Tibial artery (tissue), 4 donors: ENCODE measurements at regions of chr16 and their contacts with region 1.

Region 1: GRCh38 chr16:658679-659571 is 9.0 kb upstream of the RHOT2 start:
- DNase-seq: no peak
- H3K4me3 ChIP-seq: no peak overlapping the region
- H3K27ac ChIP-seq: no peak overlapping the region
- H3K4me1 ChIP-seq: peaks cover 0 to 15% (median 13%) of the 10 kb centered on the region in 4 donors
- H3K27me3 ChIP-seq: no peaks in the 10 kb centered on the region
- CTCF ChIP-seq: no peak

Region 2: DNA sequence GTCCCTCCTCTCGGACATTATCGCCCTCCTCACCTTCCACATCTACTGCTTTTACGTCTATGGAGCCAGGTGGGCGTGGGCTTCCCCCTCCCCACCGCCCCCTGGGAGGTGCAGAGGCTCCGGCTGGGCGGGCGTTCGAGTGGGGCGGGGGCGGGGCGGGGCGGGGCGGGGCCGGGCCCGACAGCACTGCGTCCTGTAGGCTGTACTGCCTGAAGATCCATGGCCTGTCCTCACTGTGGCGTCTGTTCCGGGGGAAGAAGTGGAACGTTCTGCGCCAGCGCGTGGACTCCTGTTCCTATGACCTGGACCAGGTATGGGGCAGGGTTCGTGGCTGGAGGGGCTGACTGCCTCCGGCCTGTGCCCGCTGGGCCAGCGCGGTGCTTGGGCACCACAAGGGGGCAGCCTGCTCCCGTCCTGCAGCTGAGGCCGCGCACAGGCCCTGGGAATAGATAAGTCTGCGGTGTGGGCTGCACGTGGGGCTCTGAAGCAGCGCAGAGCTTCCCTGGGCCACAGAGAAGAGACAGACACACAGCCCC is 80.0 kb before region 1 on chr16:
- intact Hi-C with region 1: loop called (anchors 5 kb)
- DNase-seq: peak; percentile 62 to 78
- H3K4me3 ChIP-seq: no peak overlapping the region
- H3K27ac ChIP-seq: no peak overlapping the region
- H3K4me1 ChIP-seq: peaks cover 0 to 2% (median 0%) of the 10 kb centered on the region in 4 donors
- H3K27me3 ChIP-seq: no peaks in the 10 kb centered on the region
- CTCF ChIP-seq: peak; percentile 63 to 80

Region 3: DNA sequence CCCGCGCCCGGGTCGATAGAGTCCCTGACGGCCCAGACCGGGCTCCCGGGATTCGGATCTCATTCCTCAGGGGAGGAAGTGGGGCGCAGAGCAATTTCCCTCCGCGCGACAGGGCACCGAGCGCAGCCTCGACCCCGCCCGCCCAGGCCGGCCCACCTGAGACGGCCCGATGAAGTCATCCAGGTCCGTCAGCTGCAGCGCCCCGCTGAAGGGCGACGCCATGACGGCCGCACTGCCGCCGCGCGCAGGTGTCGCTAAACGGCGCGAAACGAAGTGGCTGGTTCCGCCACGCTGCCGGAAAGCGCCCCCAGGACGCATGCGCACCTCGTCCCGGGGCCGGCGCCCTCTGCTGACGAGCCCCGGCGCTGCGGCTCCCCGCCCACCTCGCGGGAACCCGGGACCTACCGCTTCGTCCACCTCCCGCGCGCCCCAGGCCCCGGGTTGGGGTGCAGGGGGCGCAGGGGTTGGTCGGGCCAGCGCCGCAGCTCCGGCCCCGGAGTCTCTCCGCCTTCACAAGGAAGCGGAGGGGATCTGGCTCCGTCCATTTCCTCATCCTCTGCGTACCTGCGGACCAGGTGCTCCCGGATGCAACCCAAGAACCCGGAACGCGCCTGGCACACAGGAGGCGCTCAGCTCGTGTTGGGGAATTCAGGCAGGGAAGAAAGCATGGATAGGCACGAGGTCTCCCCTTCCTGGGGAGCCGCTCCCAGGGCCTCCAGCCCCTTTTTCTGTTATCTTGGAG is 82.0 kb after region 1 on chr16 and contains the start of gene CIAO3:
- intact Hi-C with region 1: no loop called
- DNase-seq: peak; percentile 78 to 92
- H3K4me3 ChIP-seq: peak within 1 kb of the TSS; percentile 71 to 88
- H3K27ac ChIP-seq: peak within 1 kb of the TSS; percentile 65 to 69
- H3K4me1 ChIP-seq: peaks cover 4 to 16% (median 16%) of the 10 kb centered on the region in 4 donors
- H3K27me3 ChIP-seq: peaks cover 0 to 22% of the 10 kb centered on the region in 2 donors
- CTCF ChIP-seq: peak; percentile 93 to 95

Region 4: DNA sequence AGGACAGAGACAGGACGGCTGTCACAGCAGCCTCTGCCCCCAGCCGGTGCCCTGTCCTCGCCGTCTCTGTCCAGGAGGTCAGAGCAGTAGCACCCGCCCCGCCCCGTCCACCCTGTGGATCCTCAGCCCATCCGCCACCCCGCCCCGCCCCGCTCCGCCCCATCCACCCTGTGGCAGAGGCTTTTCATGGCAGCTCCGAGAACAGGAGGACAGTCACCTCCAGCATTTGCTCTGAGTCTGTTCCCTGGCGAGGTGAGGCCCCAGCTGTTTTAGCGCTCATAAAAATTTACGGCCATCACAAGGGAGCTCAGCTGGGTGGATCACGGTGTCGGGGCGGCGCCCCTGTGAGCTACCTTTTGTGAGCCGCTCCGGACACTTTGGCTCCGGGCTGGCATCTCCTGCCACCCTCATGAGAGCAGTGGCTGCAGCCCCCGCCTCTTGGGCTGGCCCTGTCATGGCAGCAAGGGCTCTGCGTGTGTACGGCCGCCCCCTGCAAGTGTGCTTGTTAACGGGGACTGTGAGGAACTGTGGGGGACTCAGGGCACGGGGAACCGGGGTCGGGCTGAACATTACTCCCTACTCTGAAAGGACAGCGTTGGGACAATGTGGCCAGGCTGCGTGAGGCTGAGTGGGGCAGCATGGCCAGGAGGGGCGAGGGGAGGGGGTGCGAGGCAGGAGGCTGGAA is 173.9 kb after region 1 on chr16:
- intact Hi-C with region 1: no loop called
- DNase-seq: no peak
- H3K4me3 ChIP-seq: no peak overlapping the region
- H3K27ac ChIP-seq: no peak overlapping the region
- H3K4me1 ChIP-seq: no peaks in the 10 kb centered on the region
- H3K27me3 ChIP-seq: peaks cover 0 to 37% of the 10 kb centered on the region in 2 donors
- CTCF ChIP-seq: no peak

Region 5: GRCh38 chr16:852451-853185 is 193.7 kb after region 1 on chr16:
- intact Hi-C with region 1: no loop called
- DNase-seq: no peak
- H3K4me3 ChIP-seq: no peak overlapping the region
- H3K27ac ChIP-seq: no peak overlapping the region
- H3K4me1 ChIP-seq: no peaks in the 10 kb centered on the region
- H3K27me3 ChIP-seq: no peaks in the 10 kb centered on the region
- CTCF ChIP-seq: no peak